ENCODE measurements at regions of chr20 and their contacts with region 1.

Region 1: GRCh38 chr20:49610701-49611538 is 43.0 kb upstream of the PTGIS start:
- DNase-seq: peak; percentile 61
- ATAC-seq: peak; percentile 90
- H3K4me3 ChIP-seq: peak overlapping the region; percentile 27 to 61
- H3K27ac ChIP-seq: no peak overlapping the region; the same call in 1 of the 2 replicates
- H3K4me1 ChIP-seq: peaks cover 17% of the 10 kb centered on the region
- H3K27me3 ChIP-seq: no peaks in the 10 kb centered on the region
- CTCF ChIP-seq: peak; percentile 100

Region 2: GRCh38 chr20:49541733-49542513 is 69.0 kb before region 1 on chr20:
- CTCF ChIA-PET with region 1: interaction called, 31 read pairs
- POLR2A ChIA-PET with region 1: no interaction called
- in situ Hi-C with region 1: no loop called
- intact Hi-C with region 1: loop called (anchors 1 kb)
- DNase-seq: peak; percentile 56
- ATAC-seq: peak; percentile 79
- H3K4me3 ChIP-seq: no peak overlapping the region
- H3K27ac ChIP-seq: peak overlapping the region; percentile 30; the same call in 1 of the 2 replicates
- H3K4me1 ChIP-seq: peaks cover 6% of the 10 kb centered on the region; the same call in 1 of the 2 replicates
- H3K27me3 ChIP-seq: no peaks in the 10 kb centered on the region
- CTCF ChIP-seq: peak; percentile 96

Region 3: GRCh38 chr20:49668181-49668877 is 57.4 kb after region 1 on chr20:
- CTCF ChIA-PET with region 1: no interaction called
- POLR2A ChIA-PET with region 1: no interaction called
- in situ Hi-C with region 1: no loop called
- intact Hi-C with region 1: no loop called
- DNase-seq: no peak
- ATAC-seq: 0 out of 2 replicates have a peak, but pooled peaks have one; percentile 36
- H3K4me3 ChIP-seq: no peak overlapping the region
- H3K27ac ChIP-seq: no peak overlapping the region
- H3K4me1 ChIP-seq: peaks cover 21% of the 10 kb centered on the region
- H3K27me3 ChIP-seq: no peaks in the 10 kb centered on the region
- CTCF ChIP-seq: no peak

Region 4: DNA sequence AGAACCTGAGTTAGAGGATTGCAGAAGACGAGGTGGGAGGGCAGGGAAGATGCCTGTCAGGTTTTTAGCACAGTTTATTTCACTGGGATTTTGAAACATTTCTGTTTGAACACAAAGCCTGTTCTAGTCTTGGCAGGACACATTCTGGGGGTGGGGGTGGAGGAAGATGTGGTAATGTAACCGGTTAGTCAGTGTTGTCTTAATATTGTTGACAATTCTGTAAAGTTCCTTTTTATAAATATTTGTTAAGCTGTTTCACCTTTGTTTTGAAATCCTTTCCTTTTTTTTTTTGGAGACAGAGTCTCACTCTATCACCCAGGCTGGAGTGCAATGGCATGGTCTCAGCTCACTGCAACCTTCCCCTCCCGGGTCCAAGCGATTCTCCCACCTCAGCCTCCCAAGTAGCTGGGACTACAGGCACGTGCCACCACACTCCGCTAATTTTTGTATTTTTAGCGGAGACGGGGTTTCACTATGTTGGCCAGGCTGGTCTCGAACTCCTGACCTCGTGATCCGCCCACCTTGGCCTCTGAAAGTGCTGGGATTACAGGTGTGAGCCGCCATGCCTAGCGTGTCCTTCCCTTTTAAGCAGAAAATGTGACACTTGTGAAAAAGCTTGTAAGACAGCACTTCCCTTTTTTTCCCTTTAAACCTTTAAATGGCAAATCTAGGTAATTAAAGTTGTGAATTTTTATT is 221.9 kb after region 1 on chr20:
- CTCF ChIA-PET with region 1: interaction called, 15 read pairs
- POLR2A ChIA-PET with region 1: interaction called, 12 read pairs
- in situ Hi-C with region 1: no loop called
- intact Hi-C with region 1: no loop called
- DNase-seq: no peak
- ATAC-seq: no peak
- H3K4me3 ChIP-seq: no peak overlapping the region
- H3K27ac ChIP-seq: no peak overlapping the region
- H3K4me1 ChIP-seq: no peaks in the 10 kb centered on the region
- H3K27me3 ChIP-seq: no peaks in the 10 kb centered on the region
- CTCF ChIP-seq: no peak

Region 5: DNA sequence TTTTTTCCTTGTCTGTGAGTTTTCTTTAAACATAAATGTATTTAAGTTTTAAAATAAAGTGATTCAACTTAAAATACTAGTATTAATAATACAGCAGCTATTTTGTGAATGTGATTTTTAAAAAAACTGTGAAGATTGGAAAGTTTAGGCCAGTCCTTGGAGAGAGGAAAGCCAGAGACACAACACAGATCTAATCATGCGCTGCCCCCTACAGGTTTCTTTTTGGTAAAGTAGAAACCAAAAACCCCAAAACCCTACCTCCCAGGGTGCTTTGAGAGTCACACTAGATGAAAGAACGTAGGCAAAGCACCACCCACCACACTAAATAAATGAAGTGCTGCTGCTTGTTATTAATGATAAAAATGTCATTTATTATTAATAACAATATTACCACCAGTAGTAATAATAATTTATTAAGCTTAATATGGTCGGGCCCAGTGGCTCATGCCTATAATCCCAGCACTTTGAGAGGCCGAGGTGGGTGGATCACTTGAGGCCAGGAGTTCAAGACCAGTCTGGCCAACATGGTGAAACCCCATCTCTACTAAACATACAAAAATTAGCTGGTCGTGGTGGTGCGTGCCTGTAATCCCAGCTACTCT is 235.4 kb after region 1 on chr20:
- CTCF ChIA-PET with region 1: interaction called, 14 read pairs
- POLR2A ChIA-PET with region 1: no interaction called
- in situ Hi-C with region 1: no loop called
- intact Hi-C with region 1: loop called (anchors 5 kb)
- DNase-seq: peak; percentile 35
- ATAC-seq: peak; percentile 91
- H3K4me3 ChIP-seq: no peak overlapping the region
- H3K27ac ChIP-seq: no peak overlapping the region
- H3K4me1 ChIP-seq: no peaks in the 10 kb centered on the region
- H3K27me3 ChIP-seq: no peaks in the 10 kb centered on the region
- CTCF ChIP-seq: peak; percentile 79

Region 6: DNA sequence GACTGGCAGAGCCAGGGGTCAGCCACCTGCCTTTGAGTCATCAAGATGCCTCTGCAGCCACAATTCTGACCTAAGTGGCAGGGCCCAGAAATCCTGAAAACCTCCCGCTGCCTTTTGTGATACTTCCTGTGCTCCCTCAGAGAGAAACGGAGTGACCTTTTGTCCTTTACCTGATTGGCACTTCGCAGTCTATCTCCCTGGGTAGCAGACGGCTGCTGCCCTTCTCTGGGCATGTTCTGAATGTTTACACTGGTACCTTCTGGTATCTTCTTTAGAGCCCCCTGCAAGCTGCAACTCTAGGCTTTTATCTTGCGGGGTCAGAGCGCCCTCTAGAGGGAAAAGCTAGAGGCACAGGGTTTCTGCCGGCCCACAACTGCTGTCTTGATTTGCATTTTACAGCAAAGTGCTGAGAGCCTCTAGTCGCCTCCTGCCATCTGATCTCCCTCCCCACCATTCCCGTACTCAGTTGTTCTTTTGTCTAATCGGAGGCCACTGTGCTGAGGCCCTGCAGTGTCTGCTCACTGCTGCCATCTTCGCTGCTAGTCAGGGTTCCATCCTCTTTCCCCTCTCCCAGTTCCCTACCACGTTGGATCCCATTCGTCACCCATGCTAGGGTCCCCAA is 277.5 kb after region 1 on chr20:
- CTCF ChIA-PET with region 1: interaction called, 12 read pairs
- POLR2A ChIA-PET with region 1: no interaction called
- in situ Hi-C with region 1: no loop called
- intact Hi-C with region 1: loop called (anchors 5 kb)
- DNase-seq: peak; percentile 38
- ATAC-seq: peak; percentile 72
- H3K4me3 ChIP-seq: no peak overlapping the region
- H3K27ac ChIP-seq: no peak overlapping the region
- H3K4me1 ChIP-seq: peaks cover 35% of the 10 kb centered on the region
- H3K27me3 ChIP-seq: no peaks in the 10 kb centered on the region
- CTCF ChIP-seq: peak; percentile 95

Region 7: GRCh38 chr20:49893242-49894072 is 282.5 kb after region 1 on chr20:
- CTCF ChIA-PET with region 1: interaction called, 12 read pairs
- POLR2A ChIA-PET with region 1: interaction called, 3 read pairs
- in situ Hi-C with region 1: no loop called
- intact Hi-C with region 1: loop called (anchors 5 kb)
- DNase-seq: no peak
- ATAC-seq: no peak
- H3K4me3 ChIP-seq: no peak overlapping the region
- H3K27ac ChIP-seq: peak overlapping the region; percentile 24; the same call in 1 of the 2 replicates
- H3K4me1 ChIP-seq: peaks cover 30% of the 10 kb centered on the region
- H3K27me3 ChIP-seq: no peaks in the 10 kb centered on the region
- CTCF ChIP-seq: no peak

Region 8: DNA sequence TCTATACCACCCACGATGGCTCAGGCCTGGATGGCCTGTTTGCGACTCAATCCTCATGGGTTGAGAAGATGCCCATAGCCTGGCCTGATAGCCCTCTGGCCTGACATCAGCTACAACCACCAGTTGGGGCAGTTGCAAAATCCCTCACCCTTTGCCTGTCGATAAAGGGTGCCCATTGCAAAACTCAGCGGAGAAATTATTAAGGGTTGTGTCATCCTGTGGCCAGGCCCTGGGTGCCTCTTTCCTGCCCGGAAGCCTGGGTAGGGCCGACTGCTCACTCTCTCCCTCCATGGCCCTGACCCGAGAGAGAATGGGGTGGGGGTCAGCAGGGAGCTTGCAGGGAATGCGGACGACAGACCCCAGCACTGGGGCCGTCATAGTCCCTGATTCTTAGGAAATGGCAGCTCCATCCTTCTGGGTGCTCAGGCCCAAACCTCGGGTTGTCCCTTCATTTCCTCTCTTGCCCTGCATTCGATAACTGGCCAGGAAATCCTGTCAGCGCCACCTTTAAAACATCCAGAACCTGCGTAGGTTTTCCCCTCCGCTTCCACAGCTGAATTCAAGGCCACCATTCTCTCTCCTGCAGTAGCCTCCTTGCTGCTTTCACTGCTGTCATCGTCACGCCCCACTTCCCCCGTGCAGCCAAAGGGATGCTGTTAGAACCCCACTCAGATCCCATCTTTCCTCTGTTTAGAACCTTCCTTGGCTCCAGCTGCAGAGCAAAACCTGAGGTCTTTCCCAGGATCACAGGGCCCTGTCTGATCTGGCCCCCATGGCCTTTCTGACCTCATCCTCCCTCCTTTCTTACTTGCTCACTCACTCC is 610.8 kb after region 1 on chr20:
- CTCF ChIA-PET with region 1: no interaction called
- POLR2A ChIA-PET with region 1: no interaction called
- in situ Hi-C with region 1: no loop called
- intact Hi-C with region 1: no loop called
- DNase-seq: no peak
- ATAC-seq: no peak
- H3K4me3 ChIP-seq: no peak overlapping the region
- H3K27ac ChIP-seq: no peak overlapping the region
- H3K4me1 ChIP-seq: no peaks in the 10 kb centered on the region
- H3K27me3 ChIP-seq: no peaks in the 10 kb centered on the region
- CTCF ChIP-seq: no peak

Measured in Panc1 (cell line).